Dorsolateral prefrontal cortex (tissue), 120 donors: ENCODE measurements at regions of chr4 and their contacts with region 1.

Region 1: DNA sequence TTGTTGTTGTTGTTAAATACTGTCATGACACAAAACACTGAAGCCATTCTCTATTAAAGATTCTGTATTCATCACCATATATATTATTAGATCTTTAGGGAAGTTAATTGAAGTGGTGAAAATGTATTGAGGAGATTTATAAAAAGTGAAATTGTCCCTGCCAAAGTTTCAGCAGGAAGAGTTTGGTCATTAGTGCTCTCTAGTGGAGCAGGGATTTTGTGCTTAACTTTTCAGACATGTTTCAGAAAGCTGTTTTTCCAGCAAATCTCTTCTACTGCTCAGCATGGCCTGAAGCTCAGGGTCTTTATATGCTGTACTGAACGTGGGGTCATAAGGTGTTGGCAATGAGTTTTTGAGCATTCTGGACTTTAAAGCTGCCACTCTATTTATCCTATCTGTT is 36.7 kb upstream of the CXXC4 start:
- DNase-seq: no peak
- H3K4me3 ChIP-seq: no peak overlapping the region
- H3K27ac ChIP-seq: no peak overlapping the region
- H3K27me3 ChIP-seq: no peaks in the 10 kb centered on the region
- CTCF ChIP-seq: peak in 49 of 56 donors; percentile 14 to 69 (median 46)

Region 2: GRCh38 chr4:103645991-103646390 is 885.4 kb before region 1 on chr4:
- intact Hi-C with region 1: no loop called
- DNase-seq: no peak
- H3K4me3 ChIP-seq: no peak overlapping the region
- H3K27ac ChIP-seq: no peak overlapping the region
- H3K27me3 ChIP-seq: no peaks in the 10 kb centered on the region
- CTCF ChIP-seq: no peak

Region 3: DNA sequence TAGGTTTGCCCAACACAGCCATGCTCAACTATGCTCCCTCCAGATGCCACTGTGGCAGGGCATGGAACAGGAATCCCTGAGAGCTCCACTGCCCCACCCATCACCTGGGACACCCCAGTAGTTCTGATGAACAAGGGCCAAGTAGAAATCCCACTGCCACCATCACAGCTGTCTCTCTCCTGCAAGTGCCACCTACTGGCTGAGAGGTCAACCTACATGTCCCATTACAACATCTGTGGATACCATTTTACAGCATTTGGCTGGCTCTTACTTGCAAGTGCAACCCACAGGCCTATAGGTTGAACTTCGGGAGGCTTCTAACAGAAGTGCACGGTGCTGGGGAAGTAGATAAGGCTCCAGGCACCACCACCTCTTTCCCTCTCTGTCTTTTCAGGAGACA is 179.2 kb before region 1 on chr4:
- intact Hi-C with region 1: no loop called
- DNase-seq: no peak
- H3K4me3 ChIP-seq: no peak overlapping the region
- H3K27ac ChIP-seq: no peak overlapping the region
- H3K27me3 ChIP-seq: no peaks in the 10 kb centered on the region
- CTCF ChIP-seq: no peak

Region 4: GRCh38 chr4:104490770-104491480 is 40.5 kb before region 1 on chr4:
- intact Hi-C with region 1: loop called in 1 of 2 experiments (anchors 5 kb)
- DNase-seq: peak; percentile 59 to 76 (median 68)
- H3K4me3 ChIP-seq: peak overlapping the region; percentile 53 to 86 (median 72)
- H3K27ac ChIP-seq: peak overlapping the region; percentile 35 to 97 (median 93)
- H3K27me3 ChIP-seq: peaks cover 0 to 8% (median 0%) of the 10 kb centered on the region in 45 donors
- CTCF ChIP-seq: peak in 2 of 56 donors; percentile 1 to 6